HepG2 (cell line): ENCODE measurements at regions of chr15 and their contacts with region 1.

Region 1: DNA sequence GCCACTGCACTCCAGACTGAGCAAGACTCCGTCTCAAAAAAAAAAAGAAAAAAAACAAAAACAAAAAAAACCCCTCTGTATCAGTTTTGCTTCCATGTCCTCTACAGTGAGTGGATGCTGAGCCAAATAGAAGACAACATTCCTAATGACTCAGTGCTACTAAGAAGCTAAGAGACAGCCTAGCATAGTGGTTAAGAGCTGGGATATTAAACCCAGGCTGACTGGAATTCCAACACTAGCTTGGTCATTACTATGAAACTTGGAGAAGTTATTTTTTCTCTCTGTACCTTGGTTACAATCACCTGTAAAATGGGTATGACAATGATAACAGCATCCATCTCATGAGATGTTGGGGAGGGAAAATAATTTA is 60.9 kb upstream of the PYGO1 start:
- DNase-seq: no peak
- ATAC-seq: no peak
- H3K4me3 ChIP-seq: no peak overlapping the region
- H3K27ac ChIP-seq: no peak overlapping the region
- H3K4me1 ChIP-seq: no peaks in the 10 kb centered on the region
- H3K27me3 ChIP-seq: no peaks in the 10 kb centered on the region
- CTCF ChIP-seq: no peak
- EP300 ChIP-seq: no peak
- POLR2A ChIP-seq: no peak
- RAD21 ChIP-seq: no peak

Region 2: GRCh38 chr15:55799291-55800212 is 150.5 kb after region 1 on chr15:
- CTCF ChIA-PET with region 1: interaction called, 34 read pairs
- POLR2A ChIA-PET with region 1: no interaction called
- in situ Hi-C with region 1: loop called (anchors 5 kb)
- intact Hi-C with region 1: loop called (anchors 1 kb)
- DNase-seq: peak; percentile 46
- ATAC-seq: peak; percentile 73
- H3K4me3 ChIP-seq: peak overlapping the region in 2 of 3 experiments; percentile 11 to 35; a peak in 2 of 6 replicates
- H3K27ac ChIP-seq: no peak overlapping the region
- H3K4me1 ChIP-seq: no peaks in the 10 kb centered on the region
- H3K27me3 ChIP-seq: 0 out of 5 replicates have a peak, but pooled peaks cover 0 to 3% of the 10 kb centered on the region in 2 experiments
- CTCF ChIP-seq: peak; percentile 86
- EP300 ChIP-seq: no peak
- POLR2A ChIP-seq: no peak
- RAD21 ChIP-seq: peak; percentile 54; the same call in 1 of the 2 replicates

Region 3: GRCh38 chr15:55846116-55846707 is 197.2 kb after region 1 on chr15:
- CTCF ChIA-PET with region 1: interaction called, 16 read pairs
- POLR2A ChIA-PET with region 1: no interaction called
- in situ Hi-C with region 1: no loop called
- intact Hi-C with region 1: loop called (anchors 1 kb)
- DNase-seq: peak; percentile 69
- ATAC-seq: peak; percentile 73
- H3K4me3 ChIP-seq: no peak overlapping the region
- H3K27ac ChIP-seq: no peak overlapping the region
- H3K4me1 ChIP-seq: no peaks in the 10 kb centered on the region
- H3K27me3 ChIP-seq: no peaks in the 10 kb centered on the region
- CTCF ChIP-seq: peak; percentile 76
- EP300 ChIP-seq: no peak
- POLR2A ChIP-seq: no peak
- RAD21 ChIP-seq: peak; percentile 36; the same call in 1 of the 2 replicates